ENCODE measurements at regions of chr4 and their contacts with region 1.

Region 1: GRCh38 chr4:8681391-8681790 is 88.8 kb downstream of the CPZ start:
- DNase-seq: no peak
- ATAC-seq: no peak
- H3K4me3 ChIP-seq: no peak overlapping the region
- H3K27ac ChIP-seq: no peak overlapping the region
- H3K4me1 ChIP-seq: no peaks in the 10 kb centered on the region
- H3K27me3 ChIP-seq: no peaks in the 10 kb centered on the region
- CTCF ChIP-seq: no peak
- POLR2A ChIP-seq: no peak
- RAD21 ChIP-seq: no peak

Region 2: DNA sequence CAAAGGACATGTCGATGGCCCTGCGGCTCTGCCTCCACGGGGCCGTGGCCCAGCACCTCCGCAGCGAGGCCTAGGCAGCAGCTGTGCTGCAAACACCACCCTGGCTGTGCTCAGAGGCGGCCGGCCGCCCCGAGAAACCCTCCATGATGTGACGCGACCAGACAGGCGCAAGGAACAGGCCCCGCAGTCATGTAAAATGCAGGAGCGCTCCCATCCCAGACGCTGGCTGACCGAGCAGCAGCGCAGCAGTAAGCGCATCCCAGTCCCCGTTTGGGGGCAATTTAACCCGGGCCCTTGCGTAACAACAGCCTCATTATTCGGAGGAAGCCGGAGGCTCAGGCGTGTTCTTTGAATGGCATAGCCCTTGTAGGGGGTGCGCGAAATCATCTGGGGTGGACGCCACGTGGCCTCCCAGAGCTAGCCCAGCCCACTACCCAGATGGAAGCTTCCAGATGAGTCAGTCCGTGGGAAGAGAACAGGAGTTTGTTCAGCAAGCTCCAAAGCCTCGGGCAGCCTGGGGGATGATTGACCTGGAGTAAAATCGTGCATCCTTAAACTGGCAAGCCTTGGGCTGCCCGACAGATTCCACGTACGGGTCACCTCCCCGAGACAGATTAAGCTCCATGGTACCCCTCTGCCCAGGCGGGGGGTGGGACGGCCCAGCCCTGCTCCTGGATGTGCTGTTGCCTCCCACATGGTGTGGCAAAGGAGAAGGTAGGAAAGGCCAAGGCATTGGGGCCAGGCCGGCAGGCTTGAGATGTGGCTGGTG is 66.3 kb after region 1 on chr4:
- CTCF ChIA-PET with region 1: no interaction called
- POLR2A ChIA-PET with region 1: no interaction called
- dilution Hi-C with region 1: no loop called
- in situ Hi-C with region 1: no loop called
- intact Hi-C with region 1: loop called (anchors 2 kb)
- DNase-seq: no peak
- ATAC-seq: no peak
- H3K4me3 ChIP-seq: no peak overlapping the region
- H3K27ac ChIP-seq: no peak overlapping the region
- H3K4me1 ChIP-seq: no peaks in the 10 kb centered on the region
- H3K27me3 ChIP-seq: no peaks in the 10 kb centered on the region
- CTCF ChIP-seq: no peak
- POLR2A ChIP-seq: no peak
- RAD21 ChIP-seq: no peak

Measured in IMR-90 (cell line).